Posterior cingulate gyrus (tissue), 11 donors: ENCODE measurements at regions of chr4 and their contacts with region 1.

Region 1: GRCh38 chr4:184538023-184538599 is 63.8 kb upstream of the IRF2 start:
- DNase-seq: peak; percentile 74 to 96 (median 82)

Region 2: DNA sequence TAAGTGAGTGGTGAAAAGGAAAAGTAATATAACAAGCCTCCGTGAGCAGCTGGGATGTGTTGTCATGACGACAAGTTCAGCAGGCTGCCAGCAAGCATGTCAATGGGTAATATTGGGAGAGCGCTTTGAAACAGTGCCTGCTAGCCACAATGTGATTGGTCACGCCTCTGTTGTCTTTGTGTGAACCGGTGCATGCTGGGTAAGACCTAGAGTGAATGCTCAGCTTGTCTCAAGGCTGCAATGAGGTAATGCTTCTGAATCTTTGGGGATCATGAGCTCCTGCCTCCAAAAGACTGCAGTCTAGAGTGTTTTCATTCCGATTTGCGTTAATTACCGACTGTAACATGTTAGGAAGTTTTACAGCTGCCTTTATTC is 578.1 kb before region 1 on chr4:
- intact Hi-C with region 1: no loop called
- DNase-seq: peak; percentile 79 to 98 (median 87)

Region 3: DNA sequence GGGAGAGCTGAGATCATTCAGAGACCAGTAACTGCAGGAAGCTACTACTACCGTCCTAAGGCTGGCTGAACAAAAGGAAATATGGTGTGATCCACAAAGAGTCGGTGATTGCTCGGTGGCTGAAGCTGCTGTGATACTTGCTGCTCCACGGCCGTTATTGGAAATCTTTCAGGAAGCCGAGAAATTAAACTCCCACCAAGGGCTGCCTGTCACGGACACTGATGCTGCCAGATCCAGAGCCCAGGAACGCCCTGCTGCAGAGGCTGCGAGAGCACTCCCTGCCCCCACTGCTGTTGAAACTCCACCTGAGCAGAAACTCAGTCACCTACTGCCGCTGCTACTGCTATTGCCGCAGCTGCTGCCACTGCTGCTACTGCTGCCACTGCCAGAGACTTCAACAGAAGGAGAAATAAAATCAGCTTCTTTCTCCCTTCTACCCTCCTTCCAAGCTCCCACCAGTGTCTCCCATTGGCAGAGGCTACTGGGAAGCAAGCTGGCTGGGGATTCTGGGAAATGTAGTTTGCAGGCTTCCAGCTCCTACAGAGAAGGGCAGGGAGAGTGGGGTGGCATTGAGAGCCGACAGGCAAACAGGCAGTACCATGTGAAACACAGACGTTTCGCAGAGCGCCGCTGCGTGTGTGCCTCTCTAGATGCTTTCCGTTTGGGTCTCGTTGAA is 194.5 kb before region 1 on chr4:
- intact Hi-C with region 1: loop called (anchors 5 kb)
- DNase-seq: peak; percentile 60 to 96 (median 79)

Region 4: DNA sequence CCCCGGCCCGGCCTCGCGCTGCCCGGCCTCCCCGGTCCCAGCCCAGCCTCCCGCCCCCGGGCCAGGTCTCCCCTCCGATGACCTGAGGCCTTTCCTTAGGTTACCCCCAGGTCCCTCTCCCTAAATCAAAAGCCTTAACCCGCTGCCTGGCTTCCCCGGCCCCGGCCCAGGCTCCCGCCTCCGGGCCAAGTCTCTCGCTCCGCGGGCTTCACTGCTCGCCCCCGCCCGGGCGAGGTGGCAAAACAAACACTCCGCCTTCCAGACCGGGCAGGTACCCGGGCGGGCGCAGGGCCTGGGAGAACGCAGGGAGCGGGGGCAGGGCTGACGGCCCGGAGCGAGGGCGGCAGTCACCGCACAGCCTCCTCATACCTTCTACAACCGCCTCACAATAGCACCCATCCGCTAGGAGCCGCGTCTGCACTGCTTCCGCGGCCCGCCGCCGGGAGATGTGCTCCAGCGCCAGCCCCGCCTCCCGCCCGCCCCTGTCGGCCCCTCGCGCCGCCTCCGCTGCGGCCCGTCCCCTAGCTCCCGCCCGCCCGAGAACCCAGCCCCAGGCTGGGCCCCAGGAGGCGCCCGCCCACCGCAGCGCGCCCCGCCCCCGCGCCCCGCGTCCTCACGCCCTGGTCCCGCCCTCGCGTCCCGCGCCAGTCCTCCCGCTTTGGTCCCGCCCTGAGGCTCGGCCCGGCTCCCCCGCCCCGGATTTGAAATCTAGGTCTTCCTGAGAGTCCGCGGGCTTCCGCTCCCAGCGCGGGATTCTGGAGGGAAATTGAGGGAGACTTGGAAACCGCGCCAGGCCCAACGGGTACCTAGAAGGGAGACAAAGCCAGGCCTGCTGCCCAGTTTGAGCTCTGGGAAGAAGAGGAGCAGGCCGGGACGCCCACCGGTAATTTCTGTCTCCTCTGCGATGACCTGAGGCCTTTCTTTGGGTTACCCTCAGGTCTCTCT is 111.2 kb after region 1 on chr4 and contains the starts of genes CASP3 and PRIMPOL:
- intact Hi-C with region 1: loop called (anchors 5 kb)
- DNase-seq: peak; percentile 94 to 99 (median 96)

Region 5: GRCh38 chr4:184733654-184734524 is 195.8 kb after region 1 on chr4 and contains the start of gene CENPU:
- intact Hi-C with region 1: loop called (anchors 5 kb)
- DNase-seq: peak; percentile 91 to 99 (median 96)